Activated CD8-positive, alpha-beta T cell treated with anti-CD3 and anti-CD28 coated beads, Interleukin-2, amount 10 ng/mL, durations not matched to agents 7 days and 5 days (primary cell): ENCODE measurements at regions of chr17 and their contacts with region 1.

Region 1: GRCh38 chr17:74840989-74841666 is 18.6 kb downstream of the GRIN2C start:
- DNase-seq: no peak
- ATAC-seq: no peak
- H3K4me3 Mint-ChIP-seq: no peak overlapping the region
- H3K27ac Mint-ChIP-seq: peak overlapping the region; percentile 10
- H3K4me1 Mint-ChIP-seq: peaks cover 20% of the 10 kb centered on the region
- H3K27me3 Mint-ChIP-seq: no peaks in the 10 kb centered on the region

Region 2: GRCh38 chr17:74864866-74865395 is 23.8 kb after region 1 on chr17:
- CTCF ChIA-PET with region 1: interaction called, 10 read pairs
- POLR2A ChIA-PET with region 1: no interaction called
- DNase-seq: peak; percentile 80
- ATAC-seq: peak; percentile 60
- H3K4me3 Mint-ChIP-seq: no peak overlapping the region
- H3K27ac Mint-ChIP-seq: no peak overlapping the region
- H3K4me1 Mint-ChIP-seq: peaks cover 23% of the 10 kb centered on the region
- H3K27me3 Mint-ChIP-seq: peaks cover 18% of the 10 kb centered on the region